ENCODE measurements at regions of chr9 and their contacts with region 1.

Region 1: GRCh38 chr9:84461540-84461939 is 121.0 kb upstream of the SLC28A3 start:
- DNase-seq: no peak
- ATAC-seq: no peak
- H3K4me3 ChIP-seq: no peak overlapping the region
- H3K27ac ChIP-seq: no peak overlapping the region
- H3K4me1 ChIP-seq: no peaks in the 10 kb centered on the region
- H3K27me3 ChIP-seq: no peaks in the 10 kb centered on the region
- CTCF ChIP-seq: 0 out of 6 replicates have a peak, but pooled peaks of 1 of the 3 experiments have one; percentile 0
- EP300 ChIP-seq: no peak
- POLR2A ChIP-seq: no peak
- RAD21 ChIP-seq: no peak

Region 2: DNA sequence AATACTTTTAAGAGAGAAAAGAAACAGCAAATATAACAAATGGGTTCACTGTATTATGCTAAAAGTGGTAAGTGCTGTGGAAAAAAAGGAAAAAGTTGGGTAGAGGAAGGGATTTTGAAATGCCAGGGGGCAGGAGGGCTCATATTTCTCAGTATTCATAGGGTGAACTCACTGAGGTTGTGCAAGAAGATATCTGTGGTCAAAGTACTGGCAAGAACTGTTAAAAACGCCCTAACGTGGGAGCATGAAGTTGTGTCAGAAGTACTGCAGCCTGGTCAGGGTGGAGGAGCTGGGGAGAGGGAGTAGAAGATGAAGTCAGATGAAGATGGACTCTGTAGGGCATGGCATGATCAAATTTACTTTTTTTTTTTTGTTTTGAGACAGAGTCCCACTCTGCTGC is 89.8 kb before region 1 on chr9:
- CTCF ChIA-PET with region 1: no interaction called
- POLR2A ChIA-PET with region 1: no interaction called
- RAD21 ChIA-PET with region 1: no interaction called
- SMC1A ChIA-PET with region 1: no interaction called
- in situ Hi-C with region 1: loop called (anchors 25 kb)
- intact Hi-C with region 1: no loop called
- DNase-seq: no peak
- ATAC-seq: no peak
- H3K4me3 ChIP-seq: no peak overlapping the region
- H3K27ac ChIP-seq: no peak overlapping the region
- H3K4me1 ChIP-seq: no peaks in the 10 kb centered on the region
- H3K27me3 ChIP-seq: no peaks in the 10 kb centered on the region
- CTCF ChIP-seq: no peak
- EP300 ChIP-seq: no peak
- POLR2A ChIP-seq: no peak
- RAD21 ChIP-seq: no peak

Measured in GM12878 (cell line).